GM13977 (cell line): ENCODE measurements at regions of chr16 and their contacts with region 1.

Region 1: GRCh38 chr16:68528686-68529379 is 10.3 kb upstream of the ZFP90 start:
- DNase-seq: peak; percentile 95
- CTCF ChIP-seq: peak; percentile 99

Region 2: DNA sequence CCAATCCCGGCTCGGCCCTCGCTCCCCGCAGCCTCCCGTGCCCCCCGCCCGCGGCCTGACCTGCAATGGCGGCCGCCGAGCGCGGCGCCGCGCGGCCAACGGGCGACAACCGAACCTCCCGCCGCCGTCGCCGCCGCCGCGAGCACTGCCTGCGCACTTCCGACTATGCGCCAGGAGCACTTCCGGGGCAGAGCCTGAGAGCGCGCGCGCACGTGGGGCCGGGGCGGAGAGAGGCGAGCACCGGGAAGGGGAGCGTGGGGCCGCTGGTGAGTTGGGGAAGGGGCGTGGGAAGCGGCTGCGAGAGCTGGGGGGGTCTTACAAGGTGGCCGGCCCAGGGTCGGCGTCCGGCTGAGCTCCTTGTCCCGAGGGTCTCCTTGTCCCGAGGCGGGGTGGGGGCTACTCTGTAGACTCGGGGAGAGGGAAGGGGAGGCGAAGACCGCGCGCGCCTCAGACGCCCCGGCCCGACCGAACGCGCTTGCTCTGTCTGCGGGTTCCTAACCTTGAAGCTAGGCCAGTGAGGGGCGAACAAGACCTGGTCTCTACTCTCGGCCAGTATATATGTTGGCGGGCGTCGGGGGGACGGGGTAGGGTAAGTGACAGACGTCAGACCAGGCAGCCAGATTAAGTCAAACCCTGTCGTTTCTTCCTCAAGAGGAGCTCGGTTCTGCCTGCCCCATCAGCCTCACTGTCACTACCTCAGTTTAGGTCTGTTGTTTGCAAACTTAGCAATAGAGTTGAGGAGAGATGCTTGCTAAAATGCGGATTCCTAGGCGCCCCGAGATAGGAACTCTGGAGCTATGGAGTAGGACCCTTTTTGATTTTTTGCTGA is 603.8 kb after region 1 on chr16 and contains the starts of genes CHTF8 and UTP4:
- in situ Hi-C with region 1: loop called (anchors 25 kb)
- DNase-seq: peak; percentile 94
- CTCF ChIP-seq: no peak